ENCODE measurements at regions of chr14 and their contacts with region 1.

Region 1: DNA sequence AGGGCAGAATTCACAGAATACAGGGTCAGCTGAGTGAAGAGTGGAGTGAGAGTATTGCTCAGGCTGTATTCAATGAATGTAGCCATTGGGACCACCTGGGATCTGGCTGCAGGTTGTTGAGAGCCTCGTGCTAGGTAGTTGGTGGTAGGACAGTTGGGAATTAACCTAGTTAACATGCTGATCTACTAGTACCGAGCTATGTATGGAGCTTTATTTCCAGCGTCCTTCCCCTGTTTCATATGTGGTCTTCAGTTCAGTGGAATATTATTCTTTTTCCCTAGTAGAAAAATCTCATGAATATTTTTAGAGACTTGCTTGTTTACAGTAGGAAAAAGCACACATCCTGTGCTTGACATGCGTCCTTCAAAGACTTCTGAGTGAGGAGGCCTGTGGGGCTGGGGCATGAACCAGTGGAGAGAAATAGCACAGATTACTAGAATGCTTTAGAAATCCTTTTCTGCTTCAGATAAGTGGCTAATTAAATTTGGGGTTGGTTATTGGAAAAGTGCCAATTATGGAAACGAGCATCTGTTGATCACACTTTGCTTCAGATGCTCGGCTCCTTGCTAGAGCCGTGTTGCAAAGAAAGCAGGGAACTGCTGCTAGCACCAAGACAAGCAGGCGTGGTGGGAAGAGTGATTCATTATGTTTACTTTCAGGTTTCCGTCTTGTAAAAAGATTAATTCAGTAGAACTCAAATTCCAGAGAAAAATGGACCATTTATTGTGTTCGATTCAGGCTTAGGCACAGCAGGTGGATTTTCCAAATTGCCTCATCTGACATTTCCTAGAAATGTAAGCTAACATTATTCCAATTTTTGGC is 53.6 kb downstream of the ARF6 start:
- DNase-seq: no peak
- H3K4me3 Mint-ChIP-seq: peak overlapping the region; percentile 42
- H3K27ac Mint-ChIP-seq: peak overlapping the region; percentile 73
- H3K4me1 Mint-ChIP-seq: peaks cover 57% of the 10 kb centered on the region
- H3K27me3 Mint-ChIP-seq: no peaks in the 10 kb centered on the region

Region 2: GRCh38 chr14:49732896-49733295 is 213.6 kb before region 1 on chr14:
- intact Hi-C with region 1: no loop called
- DNase-seq: no peak
- H3K4me3 Mint-ChIP-seq: no peak overlapping the region
- H3K27ac Mint-ChIP-seq: no peak overlapping the region
- H3K4me1 Mint-ChIP-seq: no peaks in the 10 kb centered on the region
- H3K27me3 Mint-ChIP-seq: no peaks in the 10 kb centered on the region

Region 3: GRCh38 chr14:49908432-49908781 is 38.1 kb before region 1 on chr14:
- intact Hi-C with region 1: loop called (anchors 5 kb)
- DNase-seq: no peak
- H3K4me3 Mint-ChIP-seq: no peak overlapping the region
- H3K27ac Mint-ChIP-seq: no peak overlapping the region
- H3K4me1 Mint-ChIP-seq: peaks cover 30% of the 10 kb centered on the region
- H3K27me3 Mint-ChIP-seq: no peaks in the 10 kb centered on the region

Region 4: GRCh38 chr14:49959822-49960408 is 13.4 kb after region 1 on chr14:
- intact Hi-C with region 1: loop called (anchors 2 kb)
- DNase-seq: no peak
- H3K4me3 Mint-ChIP-seq: no peak overlapping the region
- H3K27ac Mint-ChIP-seq: peak overlapping the region; percentile 38
- H3K4me1 Mint-ChIP-seq: peaks cover 42% of the 10 kb centered on the region
- H3K27me3 Mint-ChIP-seq: no peaks in the 10 kb centered on the region